HCT116 (cell line): ENCODE measurements at regions of chr1 and their contacts with region 1.

Region 1: GRCh38 chr1:147494998-147495580 is 46.2 kb upstream of the BCL9 start:
- DNase-seq: peak; percentile 72
- ATAC-seq: peak; percentile 99
- H3K4me3 ChIP-seq: no peak overlapping the region
- H3K27ac ChIP-seq: no peak overlapping the region
- H3K4me1 ChIP-seq: no peaks in the 10 kb centered on the region; a peak in 1 of 4 replicates
- H3K27me3 ChIP-seq: no peaks in the 10 kb centered on the region
- CTCF ChIP-seq: peak; percentile 83 to 95 (median 94)
- POLR2A ChIP-seq: no peak
- RAD21 ChIP-seq: peak; percentile 94

Region 2: DNA sequence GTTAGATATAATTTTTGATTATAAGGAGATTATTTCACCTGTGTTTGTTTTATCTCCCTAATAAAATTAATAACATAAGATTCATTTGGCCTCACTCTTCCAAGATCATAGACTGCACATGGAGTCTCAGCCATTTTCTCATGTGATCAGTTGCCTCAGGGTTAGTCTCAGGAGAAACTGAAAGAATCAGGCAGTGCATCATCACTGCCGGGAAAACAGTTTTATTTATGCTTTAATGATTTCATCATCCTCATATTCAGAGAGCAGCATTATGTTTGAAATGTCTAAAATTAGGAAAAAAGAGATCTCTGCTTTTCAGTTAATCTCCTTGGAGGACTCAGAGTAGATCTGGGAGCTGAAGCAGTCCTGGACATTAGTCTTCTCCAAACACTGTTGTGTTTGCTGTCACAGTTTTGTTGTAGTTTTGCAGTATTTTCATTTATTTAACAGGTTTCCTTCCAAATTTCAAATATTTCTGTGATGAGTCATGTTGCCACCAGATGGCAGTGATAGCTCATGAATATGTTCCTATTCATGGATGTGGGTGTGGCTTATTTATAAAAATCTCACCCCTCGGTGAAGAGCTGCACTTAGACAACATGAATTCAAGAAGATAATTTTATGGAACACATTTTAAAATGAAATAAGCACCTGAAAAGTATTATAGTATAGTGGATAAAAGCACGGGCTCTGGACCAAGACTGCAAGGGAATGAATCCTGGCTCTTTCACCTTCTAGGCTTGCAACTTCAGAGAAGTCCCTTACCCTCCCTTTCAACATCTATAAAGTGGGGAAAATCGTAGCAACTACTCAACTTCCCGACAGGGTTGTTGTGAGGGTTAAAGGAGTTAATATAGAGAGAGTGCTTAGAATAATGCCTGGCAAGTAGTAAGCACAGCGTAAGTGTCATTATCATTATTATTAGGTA is 221.4 kb before region 1 on chr1:
- CTCF ChIA-PET with region 1: interaction called, 14 read pairs
- POLR2A ChIA-PET with region 1: no interaction called
- RAD21 ChIA-PET with region 1: interaction called in 1 of 2 experiments, 3 read pairs
- intact Hi-C with region 1: loop called (anchors 5 kb)
- DNase-seq: peak; percentile 29
- ATAC-seq: peak; percentile 73
- H3K4me3 ChIP-seq: no peak overlapping the region
- H3K27ac ChIP-seq: no peak overlapping the region
- H3K4me1 ChIP-seq: peaks cover 2 to 9% of the 10 kb centered on the region in 2 experiments; a peak in 2 of 4 replicates
- H3K27me3 ChIP-seq: no peaks in the 10 kb centered on the region
- CTCF ChIP-seq: peak; percentile 25 to 63 (median 37); a peak in 5 of 6 replicates
- POLR2A ChIP-seq: no peak
- RAD21 ChIP-seq: peak; percentile 61

Region 3: GRCh38 chr1:147627435-147628110 is 132.5 kb after region 1 on chr1:
- CTCF ChIA-PET with region 1: interaction called, 4 read pairs
- POLR2A ChIA-PET with region 1: no interaction called
- RAD21 ChIA-PET with region 1: no interaction called
- intact Hi-C with region 1: loop called (anchors 1 kb)
- DNase-seq: peak; percentile 13
- ATAC-seq: peak; percentile 89
- H3K4me3 ChIP-seq: no peak overlapping the region
- H3K27ac ChIP-seq: no peak overlapping the region
- H3K4me1 ChIP-seq: no peaks in the 10 kb centered on the region
- H3K27me3 ChIP-seq: no peaks in the 10 kb centered on the region
- CTCF ChIP-seq: peak; percentile 64 to 90 (median 86)
- POLR2A ChIP-seq: no peak
- RAD21 ChIP-seq: peak; percentile 68

Region 4: DNA sequence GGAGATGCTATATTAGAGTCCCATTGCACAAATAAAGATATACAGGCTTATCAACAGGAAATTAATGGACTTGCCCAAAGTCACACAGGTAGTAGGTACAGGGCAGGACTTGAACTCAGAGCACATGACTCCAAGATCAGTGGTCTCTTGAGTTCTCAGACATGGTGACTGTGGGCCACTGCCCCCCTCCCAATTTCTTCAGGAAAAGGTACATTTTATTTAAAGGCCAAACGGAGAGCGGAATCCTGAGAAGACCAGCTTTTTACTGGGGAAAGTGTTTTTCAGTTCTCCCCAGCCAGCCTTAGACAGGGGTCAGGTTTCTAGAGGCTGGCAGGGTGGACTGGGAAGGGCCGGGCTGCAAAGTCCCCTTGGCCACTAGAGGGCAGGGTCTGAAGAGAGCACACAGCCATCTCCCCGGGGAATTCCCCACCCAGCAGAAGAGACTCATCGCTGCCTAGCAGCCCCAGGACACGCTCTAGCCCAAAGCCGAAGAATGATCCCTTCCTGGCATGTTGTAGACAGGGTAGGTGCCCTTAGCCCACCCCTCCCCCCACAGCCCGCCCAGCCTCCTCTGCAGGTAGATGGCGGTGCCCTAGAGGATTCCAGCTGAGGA is 145.6 kb after region 1 on chr1:
- CTCF ChIA-PET with region 1: interaction called, 7 read pairs
- POLR2A ChIA-PET with region 1: no interaction called
- RAD21 ChIA-PET with region 1: no interaction called
- intact Hi-C with region 1: loop called (anchors 1 kb)
- DNase-seq: peak; percentile 44
- ATAC-seq: peak; percentile 99
- H3K4me3 ChIP-seq: no peak overlapping the region
- H3K27ac ChIP-seq: no peak overlapping the region
- H3K4me1 ChIP-seq: peaks cover 0 to 11% of the 10 kb centered on the region in 2 experiments; a peak in 1 of 4 replicates
- H3K27me3 ChIP-seq: no peaks in the 10 kb centered on the region
- CTCF ChIP-seq: peak; percentile 58 to 96 (median 84)
- POLR2A ChIP-seq: no peak
- RAD21 ChIP-seq: peak; percentile 50; the same call in 1 of the 2 replicates

Region 5: DNA sequence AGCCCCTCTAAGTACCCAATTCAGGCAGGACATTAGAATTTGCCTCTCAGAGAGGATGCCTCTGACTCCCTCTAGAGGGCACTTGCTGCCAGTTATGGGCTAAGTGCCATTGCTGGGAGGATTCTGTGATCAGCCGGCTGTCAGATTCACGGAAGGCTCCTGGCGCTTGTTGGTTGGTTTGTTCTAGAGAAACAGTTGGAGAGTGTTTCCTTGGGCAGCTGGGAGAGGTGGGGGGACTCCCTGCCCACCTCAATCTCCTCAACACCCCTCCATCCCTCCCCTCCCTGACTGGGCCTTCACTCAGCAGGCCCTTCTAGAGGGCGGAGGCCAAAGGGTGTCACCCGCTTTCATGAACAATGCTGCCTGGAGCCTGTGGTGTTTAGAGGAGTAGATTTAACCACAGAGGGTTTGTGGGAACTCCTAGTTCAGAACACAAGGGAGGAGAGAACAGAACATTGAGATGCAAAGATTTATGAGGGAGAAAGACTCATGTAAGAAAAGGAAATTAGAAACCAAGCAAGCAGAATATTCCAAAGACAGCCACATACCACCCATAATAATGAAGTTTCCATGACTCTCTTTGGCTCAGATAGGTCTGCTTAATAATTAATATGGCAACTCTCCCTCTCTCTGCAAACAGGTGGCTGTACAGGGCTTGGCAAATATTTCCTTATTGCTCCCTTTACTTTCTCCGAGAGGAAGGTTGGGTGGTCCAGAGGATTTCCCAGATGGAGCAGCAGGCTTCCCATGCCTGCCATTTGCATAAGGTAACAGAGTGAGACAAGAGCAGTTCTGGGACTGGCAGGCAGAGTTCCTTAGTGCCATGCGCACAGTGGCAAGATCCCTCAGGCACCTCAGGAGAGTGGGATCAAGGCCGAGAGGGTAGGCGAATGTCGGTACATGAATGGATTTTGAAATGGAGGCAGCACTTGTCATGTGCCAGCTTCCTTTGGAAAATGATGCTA is 205.2 kb after region 1 on chr1:
- CTCF ChIA-PET with region 1: no interaction called
- POLR2A ChIA-PET with region 1: no interaction called
- RAD21 ChIA-PET with region 1: no interaction called
- intact Hi-C with region 1: loop called (anchors 5 kb)
- DNase-seq: peak; percentile 36
- ATAC-seq: peak; percentile 95
- H3K4me3 ChIP-seq: no peak overlapping the region
- H3K27ac ChIP-seq: no peak overlapping the region
- H3K4me1 ChIP-seq: peaks cover 0 to 4% of the 10 kb centered on the region in 2 experiments; a peak in 2 of 4 replicates
- H3K27me3 ChIP-seq: no peaks in the 10 kb centered on the region
- CTCF ChIP-seq: peak; percentile 67 to 98 (median 90); a peak in 5 of 6 replicates
- POLR2A ChIP-seq: no peak
- RAD21 ChIP-seq: peak; percentile 75